ENCODE measurements at regions of chr14 and their contacts with region 1.

Region 1: GRCh38 chr14:60331201-60332045 is 82.4 kb downstream of the PPM1A start:
- DNase-seq: peak; percentile 52
- ATAC-seq: peak; percentile 80
- H3K4me3 ChIP-seq: peak overlapping the region; percentile 69
- H3K27ac ChIP-seq: peak overlapping the region; percentile 84
- H3K4me1 ChIP-seq: peaks cover 11% of the 10 kb centered on the region
- H3K27me3 ChIP-seq: no peaks in the 10 kb centered on the region
- CTCF ChIP-seq: peak; percentile 71 to 91 (median 84)
- EP300 ChIP-seq: no peak
- POLR2A ChIP-seq: peak; percentile 65
- RAD21 ChIP-seq: peak; percentile 68

Region 2: DNA sequence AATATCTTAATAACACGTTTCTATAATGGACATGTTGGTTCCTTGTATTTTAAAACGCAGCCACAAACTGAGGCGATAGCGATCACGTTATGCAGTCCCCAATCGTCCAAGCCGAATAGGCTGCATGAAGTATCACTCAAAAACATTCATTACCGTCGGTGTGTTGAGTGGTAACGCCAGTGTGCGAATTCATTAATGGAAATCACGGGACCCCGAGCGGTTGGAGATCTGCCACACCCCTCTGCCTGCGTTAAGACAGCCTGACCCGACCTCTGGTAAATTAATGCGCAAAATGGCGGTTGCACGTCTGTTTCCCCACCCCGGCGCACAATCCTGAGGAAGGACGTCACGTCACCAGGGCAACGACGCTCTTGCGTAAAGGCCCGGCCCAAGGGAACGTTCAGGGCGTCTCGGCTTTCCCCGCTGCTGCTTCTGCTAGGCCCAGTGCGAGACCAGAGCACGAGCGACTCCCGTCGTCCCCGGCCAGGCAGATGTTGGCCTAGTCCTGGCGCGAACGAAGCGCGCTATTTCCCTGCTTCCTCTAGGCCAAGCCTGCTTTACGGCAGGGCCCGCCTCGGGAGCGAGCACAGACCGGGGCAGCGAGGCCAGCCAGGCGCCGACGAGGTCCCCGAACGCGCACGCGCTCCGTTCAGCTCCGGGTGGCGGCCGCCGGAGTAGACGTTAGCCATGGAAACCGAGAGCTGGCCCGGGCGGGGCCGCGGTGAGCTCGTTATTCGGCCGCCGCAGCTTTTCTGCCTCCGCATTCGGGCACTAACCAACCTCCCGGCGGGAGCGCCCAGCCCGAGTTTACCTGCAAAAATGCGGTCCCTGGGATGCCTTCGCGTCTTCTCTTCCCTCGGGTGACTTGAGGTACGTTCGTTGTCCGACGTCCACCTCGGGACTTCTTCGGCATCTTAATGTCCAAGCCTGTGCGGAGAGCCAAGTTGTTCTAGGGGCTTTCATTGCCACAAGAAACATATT is 239.6 kb before region 1 on chr14 and contains the start of gene PCNX4:
- CTCF ChIA-PET with region 1: interaction called, 4 read pairs
- POLR2A ChIA-PET with region 1: no interaction called
- RAD21 ChIA-PET with region 1: interaction called, 3 read pairs
- SMC1A ChIA-PET with region 1: no interaction called
- in situ Hi-C with region 1: no loop called
- intact Hi-C with region 1: loop called (anchors 10 kb)
- DNase-seq: peak; percentile 96
- ATAC-seq: peak; percentile 89
- H3K4me3 ChIP-seq: peak within 1 kb of the TSS; percentile 74
- H3K27ac ChIP-seq: peak within 1 kb of the TSS; percentile 95
- H3K4me1 ChIP-seq: peaks cover 11% of the 10 kb centered on the region
- H3K27me3 ChIP-seq: no peaks in the 10 kb centered on the region
- CTCF ChIP-seq: 0 out of 6 replicates have a peak, but pooled peaks of 1 of the 3 experiments have one; percentile 2
- EP300 ChIP-seq: peak; percentile 39 to 50; a peak in 3 of 4 replicates
- POLR2A ChIP-seq: peak; percentile 97
- RAD21 ChIP-seq: no peak
- polyA plus RNA-seq, gene PCNX4: 13.8 to 15.7 TPM

Region 3: DNA sequence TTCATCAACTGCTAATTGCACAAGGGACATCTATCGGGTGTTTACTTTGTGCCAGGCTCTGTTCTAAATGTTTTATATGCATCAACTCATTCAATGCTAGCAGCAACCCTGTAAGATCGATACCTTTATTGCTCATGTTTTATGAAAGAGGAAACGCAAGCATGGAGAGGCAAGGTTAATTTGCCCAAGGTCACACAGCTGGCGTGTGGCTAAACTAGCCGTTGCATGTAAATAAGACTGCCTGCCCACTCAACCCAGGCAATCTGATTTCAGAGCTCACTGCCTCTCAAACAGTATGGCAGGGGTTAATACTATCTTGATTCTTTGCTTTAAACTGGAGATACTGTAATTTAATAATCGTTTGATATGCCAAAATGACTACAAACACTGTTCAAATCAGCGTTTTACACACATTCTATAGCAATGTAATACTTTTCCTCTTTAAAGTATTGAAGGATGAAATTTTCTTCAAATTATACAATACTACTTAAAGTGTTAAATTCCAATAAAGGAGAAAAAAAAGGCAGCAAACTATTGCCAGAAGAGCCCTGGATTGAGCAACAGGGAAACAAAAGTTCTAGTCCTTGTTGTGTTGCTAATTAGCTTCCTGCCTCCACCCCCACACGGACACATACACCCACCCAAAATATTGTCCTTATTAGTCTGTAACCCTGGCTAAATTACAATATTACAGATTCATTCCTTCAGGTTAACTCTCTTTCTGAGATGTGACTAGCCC is 127.2 kb before region 1 on chr14:
- CTCF ChIA-PET with region 1: interaction called, 47 read pairs
- POLR2A ChIA-PET with region 1: interaction called, 7 read pairs
- RAD21 ChIA-PET with region 1: interaction called, 26 read pairs
- SMC1A ChIA-PET with region 1: interaction called, 56 read pairs
- in situ Hi-C with region 1: no loop called
- intact Hi-C with region 1: no loop called
- DNase-seq: peak; percentile 90
- ATAC-seq: peak; percentile 78
- H3K4me3 ChIP-seq: peak overlapping the region; percentile 43; the same call in 1 of the 2 replicates
- H3K27ac ChIP-seq: peak overlapping the region; percentile 91
- H3K4me1 ChIP-seq: peaks cover 44% of the 10 kb centered on the region
- H3K27me3 ChIP-seq: no peaks in the 10 kb centered on the region
- CTCF ChIP-seq: no peak
- EP300 ChIP-seq: peak; percentile 77 to 88; a peak in 3 of 4 replicates
- POLR2A ChIP-seq: no peak
- RAD21 ChIP-seq: no peak

Region 4: DNA sequence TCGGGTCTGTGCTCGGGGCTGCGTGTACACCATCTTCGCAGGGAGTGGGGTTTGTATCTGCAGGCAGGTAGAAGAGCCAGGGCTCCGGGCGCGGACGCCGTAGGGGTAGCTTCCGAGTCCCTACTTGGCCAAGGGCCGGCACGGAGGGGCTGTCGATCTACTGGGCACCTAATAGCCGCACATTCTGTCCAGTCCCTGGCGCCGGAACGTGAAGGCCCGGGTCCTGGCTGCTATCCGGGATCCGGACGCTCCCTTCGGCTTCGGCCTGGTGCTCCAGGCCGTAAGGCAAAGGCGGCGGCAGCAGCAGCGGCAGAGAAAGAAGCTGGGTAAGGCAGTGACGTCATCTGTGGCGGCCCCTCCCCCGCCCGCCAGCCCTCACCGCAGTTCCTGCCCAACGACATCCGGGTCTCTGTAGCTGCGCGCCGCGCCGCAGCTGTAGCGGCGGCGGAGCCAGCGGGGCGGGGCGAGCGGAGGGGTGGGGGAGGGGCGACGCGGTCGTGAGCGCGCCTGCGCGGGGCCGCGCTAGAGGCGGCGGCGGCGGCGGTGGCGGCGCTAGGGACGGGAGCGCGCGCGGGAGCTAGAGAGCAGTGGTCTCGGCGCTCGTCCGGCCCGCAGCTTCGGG is 82.6 kb before region 1 on chr14 and contains the start of gene PPM1A:
- CTCF ChIA-PET with region 1: interaction called, 15 read pairs
- POLR2A ChIA-PET with region 1: interaction called, 6 read pairs
- RAD21 ChIA-PET with region 1: interaction called, 72 read pairs
- SMC1A ChIA-PET with region 1: interaction called, 85 read pairs
- in situ Hi-C with region 1: no loop called
- intact Hi-C with region 1: loop called (anchors 1 kb)
- DNase-seq: peak; percentile 73
- ATAC-seq: peak; percentile 69
- H3K4me3 ChIP-seq: peak within 1 kb of the TSS; percentile 87
- H3K27ac ChIP-seq: peak within 1 kb of the TSS; percentile 100
- H3K4me1 ChIP-seq: peaks cover 13% of the 10 kb centered on the region
- H3K27me3 ChIP-seq: no peaks in the 10 kb centered on the region
- CTCF ChIP-seq: no peak
- EP300 ChIP-seq: peak; percentile 57 to 60
- POLR2A ChIP-seq: peak; percentile 90
- RAD21 ChIP-seq: no peak
- polyA plus RNA-seq, gene PPM1A: 49.0 to 58.6 TPM

Region 5: GRCh38 chr14:60301685-60302084 is 29.7 kb before region 1 on chr14:
- CTCF ChIA-PET with region 1: interaction called, 13 read pairs
- POLR2A ChIA-PET with region 1: no interaction called
- RAD21 ChIA-PET with region 1: interaction called, 11 read pairs
- SMC1A ChIA-PET with region 1: interaction called, 5 read pairs
- in situ Hi-C with region 1: no loop called
- intact Hi-C with region 1: no loop called
- DNase-seq: no peak
- ATAC-seq: no peak
- H3K4me3 ChIP-seq: no peak overlapping the region
- H3K27ac ChIP-seq: no peak overlapping the region
- H3K4me1 ChIP-seq: no peaks in the 10 kb centered on the region
- H3K27me3 ChIP-seq: no peaks in the 10 kb centered on the region
- CTCF ChIP-seq: no peak
- EP300 ChIP-seq: no peak
- POLR2A ChIP-seq: no peak
- RAD21 ChIP-seq: no peak

Region 6: DNA sequence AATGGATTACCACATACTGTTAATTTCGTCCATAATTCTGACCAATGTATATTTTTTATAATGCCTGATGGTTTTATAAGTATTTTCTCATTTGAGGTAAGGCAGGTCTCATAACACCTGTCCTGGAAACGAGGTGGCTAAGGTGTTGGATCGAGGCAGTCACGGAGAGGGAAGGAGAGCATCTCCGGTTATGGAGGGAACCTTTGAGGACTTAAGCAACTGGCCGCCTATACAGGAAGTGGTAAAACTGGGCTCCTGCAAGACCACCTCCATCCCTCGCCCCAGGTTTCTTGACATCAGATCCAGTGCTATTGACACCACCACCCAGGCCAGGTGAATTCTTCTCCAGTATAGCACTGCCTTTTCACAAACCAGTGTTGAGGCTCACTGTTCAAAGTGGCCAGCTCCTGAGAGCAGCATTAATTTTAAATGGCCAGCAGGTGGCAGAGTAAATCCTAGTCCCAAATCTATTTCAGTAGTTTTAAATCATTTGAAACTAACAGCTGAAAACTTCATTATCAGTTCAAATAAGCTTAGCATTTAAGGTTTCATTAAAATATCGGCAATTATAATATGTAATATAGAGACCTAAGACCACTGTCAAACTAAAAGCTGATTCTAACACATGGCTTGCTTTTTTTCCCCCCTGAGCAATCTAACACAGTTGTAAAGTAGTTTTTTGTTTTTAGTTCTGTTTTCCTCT is 18.4 kb after region 1 on chr14:
- CTCF ChIA-PET with region 1: interaction called, 81 read pairs
- POLR2A ChIA-PET with region 1: interaction called, 9 read pairs
- RAD21 ChIA-PET with region 1: interaction called, 22 read pairs
- SMC1A ChIA-PET with region 1: interaction called, 19 read pairs
- in situ Hi-C with region 1: no loop called
- intact Hi-C with region 1: no loop called
- DNase-seq: no peak
- ATAC-seq: peak; percentile 81
- H3K4me3 ChIP-seq: no peak overlapping the region
- H3K27ac ChIP-seq: no peak overlapping the region
- H3K4me1 ChIP-seq: no peaks in the 10 kb centered on the region
- H3K27me3 ChIP-seq: no peaks in the 10 kb centered on the region
- CTCF ChIP-seq: peak; percentile 41 to 70 (median 65); a peak in 5 of 6 replicates
- EP300 ChIP-seq: no peak
- POLR2A ChIP-seq: no peak
- RAD21 ChIP-seq: peak; percentile 66

Measured in GM12878 (cell line).